CD4-positive, alpha-beta memory T cell (primary cell): ENCODE measurements at regions of chr20 and their contacts with region 1.

Region 1: DNA sequence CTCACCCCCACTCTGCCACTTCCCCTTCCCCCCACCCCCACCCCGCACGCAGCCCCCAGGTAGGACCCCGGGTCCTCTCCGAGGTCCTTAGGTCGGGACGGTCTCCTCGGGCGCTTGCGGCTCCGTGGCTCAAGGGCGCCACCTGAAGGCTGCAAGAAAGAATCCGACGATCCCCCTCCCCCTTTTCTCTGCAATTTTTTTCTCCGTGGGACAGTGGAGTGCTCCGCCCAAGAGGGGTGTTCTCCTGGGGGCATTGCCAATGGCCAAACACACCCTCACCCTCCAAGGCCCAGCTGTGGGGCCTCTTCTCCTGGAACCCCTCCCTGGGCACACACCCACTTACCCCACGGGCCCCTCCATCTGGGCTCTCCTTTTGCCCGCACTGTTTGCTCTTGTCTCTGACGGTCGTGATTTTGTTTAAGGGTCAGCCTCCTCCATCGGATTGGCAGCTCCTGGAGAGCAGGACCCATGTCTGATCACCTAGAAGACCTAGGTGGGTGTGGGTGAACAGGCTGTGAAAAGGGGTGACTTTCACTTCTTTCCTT is 1.1 kb upstream of the TMEM74B start:
- DNase-seq: peak in 4 of 5 donors; percentile 28 to 37 (median 30)
- H3K4me3 ChIP-seq: no peak overlapping the region
- H3K4me3 Mint-ChIP-seq: peak overlapping the region in 7 of 8 donors; percentile 1 to 82 (median 68)
- H3K27ac ChIP-seq: no peak overlapping the region
- H3K27ac Mint-ChIP-seq: peak overlapping the region in 1 of 7 donors; percentile 60
- H3K4me1 ChIP-seq: peaks cover 14% of the 10 kb centered on the region
- H3K4me1 Mint-ChIP-seq: peaks cover 6 to 13% (median 9%) of the 10 kb centered on the region in 4 donors
- H3K27me3 ChIP-seq: peaks cover 3% of the 10 kb centered on the region
- H3K27me3 Mint-ChIP-seq: peaks cover 23 to 25% of the 10 kb centered on the region in 2 donors

Region 2: GRCh38 chr20:973785-974194 is 212.1 kb before region 1 on chr20:
- CTCF ChIA-PET with region 1: no interaction called
- POLR2A ChIA-PET with region 1: no interaction called
- intact Hi-C with region 1: loop called (anchors 10 kb)
- DNase-seq: peak in 3 of 5 donors; percentile 10 to 27 (median 22)
- H3K4me3 ChIP-seq: no peak overlapping the region
- H3K4me3 Mint-ChIP-seq: peak overlapping the region in 2 of 8 donors; percentile 33 to 40
- H3K27ac ChIP-seq: no peak overlapping the region
- H3K27ac Mint-ChIP-seq: peak overlapping the region in 3 of 7 donors; percentile 64 to 81 (median 75)
- H3K4me1 ChIP-seq: no peaks in the 10 kb centered on the region
- H3K4me1 Mint-ChIP-seq: peaks cover 0 to 4% (median 2%) of the 10 kb centered on the region in 4 donors
- H3K27me3 ChIP-seq: no peaks in the 10 kb centered on the region
- H3K27me3 Mint-ChIP-seq: peaks cover 0 to 3% of the 10 kb centered on the region in 2 donors

Region 3: GRCh38 chr20:1888796-1889463 is 703.1 kb after region 1 on chr20:
- CTCF ChIA-PET with region 1: no interaction called
- POLR2A ChIA-PET with region 1: no interaction called
- intact Hi-C with region 1: no loop called
- DNase-seq: no peak
- H3K4me3 ChIP-seq: no peak overlapping the region
- H3K4me3 Mint-ChIP-seq: no peak overlapping the region
- H3K27ac ChIP-seq: no peak overlapping the region
- H3K27ac Mint-ChIP-seq: no peak overlapping the region
- H3K4me1 ChIP-seq: no peaks in the 10 kb centered on the region
- H3K4me1 Mint-ChIP-seq: no peaks in the 10 kb centered on the region
- H3K27me3 ChIP-seq: peaks cover 6% of the 10 kb centered on the region
- H3K27me3 Mint-ChIP-seq: peaks cover 26 to 40% of the 10 kb centered on the region in 2 donors